ENCODE measurements at regions of chr15 and their contacts with region 1.

Region 1: GRCh38 chr15:36579792-36580431 is 486 bp downstream of the CDIN1 start:
- DNase-seq: no peak
- ATAC-seq: peak; percentile 71
- H3K4me3 ChIP-seq: peak overlapping the region; percentile 67 to 88
- H3K27ac ChIP-seq: peak overlapping the region; percentile 95
- H3K4me1 ChIP-seq: peaks cover 16% of the 10 kb centered on the region
- H3K27me3 ChIP-seq: no peaks in the 10 kb centered on the region
- CTCF ChIP-seq: no peak

Region 2: DNA sequence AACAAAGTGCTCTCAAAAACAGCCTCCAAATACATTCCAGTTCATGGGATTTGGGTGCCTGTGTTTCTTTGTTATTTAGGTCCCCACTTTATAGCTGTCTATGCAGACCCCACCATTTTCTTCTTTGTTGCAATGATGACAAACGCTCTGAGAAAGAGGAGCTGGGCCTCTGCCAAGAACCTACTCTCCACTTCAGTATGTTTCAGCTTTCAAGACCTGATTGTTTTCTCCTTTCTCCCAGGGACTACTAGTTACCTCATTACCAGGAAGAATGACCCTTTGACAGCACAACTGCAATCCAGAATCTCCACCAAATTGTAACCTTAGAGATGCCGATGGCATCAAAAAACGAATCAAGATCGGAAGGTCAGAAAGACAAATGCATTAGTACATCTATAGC is 283.7 kb after region 1 on chr15:
- CTCF ChIA-PET with region 1: interaction called, 10 read pairs
- POLR2A ChIA-PET with region 1: no interaction called
- in situ Hi-C with region 1: no loop called
- intact Hi-C with region 1: no loop called
- DNase-seq: no peak
- ATAC-seq: no peak
- H3K4me3 ChIP-seq: no peak overlapping the region
- H3K27ac ChIP-seq: no peak overlapping the region
- H3K4me1 ChIP-seq: no peaks in the 10 kb centered on the region
- H3K27me3 ChIP-seq: no peaks in the 10 kb centered on the region; the same call in none of the 2 replicates
- CTCF ChIP-seq: no peak

Measured in Panc1 (cell line).